PC-9 (cell line): ENCODE measurements at regions of chr1 and their contacts with region 1.

Region 1: DNA sequence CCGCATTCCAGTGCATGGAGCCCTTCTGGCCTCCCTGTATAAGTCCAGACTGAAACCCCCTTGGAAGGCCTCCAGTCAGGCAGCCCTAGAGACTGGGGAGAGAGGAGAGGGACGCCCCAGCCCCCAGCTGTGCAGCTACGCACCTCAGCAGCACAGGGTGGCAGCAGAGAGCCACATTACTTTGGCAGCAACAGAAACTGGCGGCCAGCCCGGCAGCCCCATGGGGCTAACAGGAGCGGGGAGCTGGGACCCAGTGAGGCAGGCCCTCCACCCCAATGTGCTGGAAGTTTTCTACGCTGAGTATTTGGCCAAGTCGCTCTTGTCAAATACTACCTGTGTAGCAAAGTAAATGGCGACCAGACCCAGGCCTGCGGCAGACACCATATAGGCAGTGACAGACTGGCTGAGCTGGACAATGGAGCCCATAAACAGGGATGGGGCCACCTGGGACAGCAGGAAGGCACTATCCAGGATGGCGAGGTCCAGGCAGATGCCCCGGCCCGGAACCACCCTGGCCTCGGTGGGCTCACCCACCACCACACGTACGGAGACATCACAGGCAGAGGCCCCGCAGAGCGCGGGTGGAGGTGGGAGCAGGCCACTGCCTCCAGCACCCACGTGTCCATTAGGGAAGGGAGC is 21.2 kb downstream of the SLC45A3 start:
- DNase-seq: peak in 1 of 2 experiments; percentile 74
- H3K4me3 ChIP-seq: no peak overlapping the region
- H3K27ac ChIP-seq: no peak overlapping the region
- H3K4me1 ChIP-seq: peaks cover 27% of the 10 kb centered on the region
- H3K27me3 ChIP-seq: no peaks in the 10 kb centered on the region
- CTCF ChIP-seq: peak; percentile 92

Region 2: GRCh38 chr1:205335643-205336091 is 323.4 kb before region 1 on chr1:
- CTCF ChIA-PET with region 1: no interaction called
- POLR2A ChIA-PET with region 1: no interaction called
- intact Hi-C with region 1: loop called (anchors 1 kb)
- DNase-seq: peak; percentile 63 to 85
- H3K4me3 ChIP-seq: no peak overlapping the region
- H3K27ac ChIP-seq: no peak overlapping the region
- H3K4me1 ChIP-seq: peaks cover 3% of the 10 kb centered on the region
- H3K27me3 ChIP-seq: peaks cover under 1% of the 10 kb centered on the region; the same call in 1 of the 2 replicates
- CTCF ChIP-seq: peak; percentile 88

Region 3: DNA sequence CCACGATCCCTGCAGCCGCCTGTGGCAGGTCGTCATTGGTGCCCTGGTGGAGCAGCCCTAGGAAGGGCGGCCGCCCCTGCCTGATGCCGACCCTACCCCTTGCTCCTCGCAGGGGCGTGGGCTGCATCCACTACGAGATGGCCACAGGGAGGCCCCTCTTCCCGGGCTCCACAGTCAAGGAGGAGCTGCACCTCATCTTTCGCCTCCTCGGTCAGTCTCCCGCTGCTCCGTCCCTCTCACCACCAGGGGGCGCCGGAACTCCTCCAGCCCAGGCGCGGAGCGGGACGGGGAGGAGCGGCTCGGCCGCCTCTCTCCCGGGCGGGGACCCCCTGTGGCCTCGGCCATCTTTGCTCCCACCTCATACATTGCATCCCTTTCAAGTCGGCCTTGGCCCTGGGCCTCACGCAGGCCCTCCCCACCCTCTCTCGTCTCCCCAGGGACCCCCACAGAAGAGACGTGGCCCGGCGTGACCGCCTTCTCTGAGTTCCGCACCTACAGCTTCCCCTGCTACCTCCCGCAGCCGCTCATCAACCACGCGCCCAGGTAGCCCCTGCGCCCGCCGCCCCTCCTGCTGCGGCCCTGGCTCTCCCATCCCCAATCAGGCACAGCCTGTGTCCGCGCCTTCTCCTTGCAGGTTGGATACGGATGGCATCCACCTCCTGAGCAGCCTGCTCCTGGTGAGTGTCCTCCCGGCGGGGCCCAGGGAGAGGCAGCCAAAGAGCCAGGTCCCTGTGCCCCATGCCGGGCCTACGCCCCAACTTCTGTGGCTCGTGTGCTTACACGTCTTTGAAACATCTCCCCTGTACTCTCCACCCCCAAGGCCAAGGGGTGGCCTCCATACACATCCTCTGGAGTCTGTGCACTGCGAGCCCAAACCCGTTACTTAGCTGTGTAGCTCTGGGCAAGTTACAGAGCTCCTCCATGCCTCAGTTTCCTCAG is 129.9 kb before region 1 on chr1:
- CTCF ChIA-PET with region 1: interaction called, 8 read pairs
- POLR2A ChIA-PET with region 1: no interaction called
- intact Hi-C with region 1: loop called (anchors 1 kb)
- DNase-seq: peak; percentile 46 to 77
- H3K4me3 ChIP-seq: no peak overlapping the region
- H3K27ac ChIP-seq: no peak overlapping the region
- H3K4me1 ChIP-seq: no peaks in the 10 kb centered on the region
- H3K27me3 ChIP-seq: no peaks in the 10 kb centered on the region
- CTCF ChIP-seq: peak; percentile 90

Region 4: GRCh38 chr1:205585169-205585834 is 73.8 kb before region 1 on chr1:
- CTCF ChIA-PET with region 1: interaction called, 12 read pairs
- POLR2A ChIA-PET with region 1: no interaction called
- intact Hi-C with region 1: no loop called
- DNase-seq: peak in 1 of 2 experiments; percentile 56
- H3K4me3 ChIP-seq: no peak overlapping the region
- H3K27ac ChIP-seq: no peak overlapping the region
- H3K4me1 ChIP-seq: peaks cover 32% of the 10 kb centered on the region
- H3K27me3 ChIP-seq: no peaks in the 10 kb centered on the region
- CTCF ChIP-seq: no peak

Region 5: GRCh38 chr1:205631727-205632373 is 27.2 kb before region 1 on chr1 and contains the start of gene ELK4:
- CTCF ChIA-PET with region 1: interaction called, 14 read pairs
- POLR2A ChIA-PET with region 1: interaction called, 3 read pairs
- intact Hi-C with region 1: no loop called
- DNase-seq: peak; percentile 90 to 98
- H3K4me3 ChIP-seq: peak within 1 kb of the TSS; percentile 92
- H3K27ac ChIP-seq: peak within 1 kb of the TSS; percentile 84
- H3K4me1 ChIP-seq: peaks cover 22% of the 10 kb centered on the region
- H3K27me3 ChIP-seq: no peaks in the 10 kb centered on the region
- CTCF ChIP-seq: peak; percentile 63
- total RNA-seq, gene ELK4: 40.3 and 48.1 TPM in 2 replicates

Region 6: GRCh38 chr1:205689479-205689878 is 30.4 kb after region 1 on chr1:
- CTCF ChIA-PET with region 1: no interaction called
- POLR2A ChIA-PET with region 1: no interaction called
- intact Hi-C with region 1: no loop called
- DNase-seq: no peak
- H3K4me3 ChIP-seq: no peak overlapping the region
- H3K27ac ChIP-seq: peak overlapping the region; percentile 45; the same call in 1 of the 2 replicates
- H3K4me1 ChIP-seq: peaks cover 23% of the 10 kb centered on the region
- H3K27me3 ChIP-seq: no peaks in the 10 kb centered on the region
- CTCF ChIP-seq: no peak

Region 7: DNA sequence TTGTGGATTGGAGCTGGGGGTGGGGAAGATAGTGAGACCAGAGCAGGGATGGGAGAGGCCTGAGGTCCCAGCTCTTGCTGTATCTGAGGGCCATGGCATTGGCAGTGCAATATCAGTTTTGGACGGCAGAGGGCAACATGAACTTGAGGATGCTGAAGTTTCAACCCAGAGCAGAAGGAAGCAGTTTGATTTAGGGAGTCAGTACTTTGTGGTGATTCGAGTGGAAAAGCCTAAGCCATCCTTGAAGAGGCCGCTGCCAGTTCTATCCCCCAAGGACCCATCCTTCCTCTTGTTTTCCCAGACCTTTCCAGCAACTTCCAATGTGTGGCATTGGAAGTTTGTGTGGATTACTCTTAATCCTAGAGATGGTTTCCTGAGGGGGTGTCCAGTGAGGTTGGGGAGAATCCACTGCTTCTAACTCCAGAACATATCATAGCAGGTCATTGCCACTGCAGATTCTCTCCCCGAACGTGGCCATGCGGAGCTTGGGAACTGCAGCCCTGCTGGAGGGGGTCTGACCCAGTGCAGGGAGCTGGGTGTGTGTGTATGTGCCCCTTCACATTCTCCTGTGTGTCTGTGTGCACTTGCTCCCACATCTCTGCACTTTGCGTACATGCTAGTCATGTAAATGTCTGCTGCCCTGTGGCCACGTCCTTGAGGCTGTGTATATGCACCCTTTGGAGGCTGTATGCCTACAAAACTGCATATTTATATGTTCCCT is 260.1 kb after region 1 on chr1:
- CTCF ChIA-PET with region 1: no interaction called
- POLR2A ChIA-PET with region 1: no interaction called
- intact Hi-C with region 1: loop called (anchors 5 kb)
- DNase-seq: peak; percentile 66 to 76
- H3K4me3 ChIP-seq: no peak overlapping the region
- H3K27ac ChIP-seq: no peak overlapping the region
- H3K4me1 ChIP-seq: no peaks in the 10 kb centered on the region
- H3K27me3 ChIP-seq: no peaks in the 10 kb centered on the region
- CTCF ChIP-seq: peak; percentile 97

Region 8: DNA sequence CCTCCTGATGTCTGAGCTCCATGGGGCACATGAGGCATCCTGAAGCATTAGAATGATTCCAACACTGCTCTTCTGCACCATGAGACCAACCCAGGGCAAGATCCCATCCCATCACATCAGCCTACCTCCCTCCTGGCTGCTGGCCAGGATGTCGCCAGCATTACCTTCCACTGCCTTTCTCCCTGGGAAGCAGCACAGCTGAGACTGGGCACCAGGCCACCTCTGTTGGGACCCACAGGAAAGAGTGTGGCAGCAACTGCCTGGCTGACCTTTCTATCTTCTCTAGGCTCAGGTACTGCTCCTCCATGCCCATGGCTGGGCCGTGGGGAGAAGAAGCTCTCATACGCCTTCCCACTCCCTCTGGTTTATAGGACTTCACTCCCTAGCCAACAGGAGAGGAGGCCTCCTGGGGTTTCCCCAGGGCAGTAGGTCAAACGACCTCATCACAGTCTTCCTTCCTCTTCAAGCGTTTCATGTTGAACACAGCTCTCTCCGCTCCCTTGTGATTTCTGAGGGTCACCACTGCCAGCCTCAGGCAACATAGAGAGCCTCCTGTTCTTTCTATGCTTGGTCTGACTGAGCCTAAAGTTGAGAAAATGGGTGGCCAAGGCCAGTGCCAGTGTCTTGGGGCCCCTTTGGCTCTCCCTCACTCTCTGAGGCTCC is 837.2 kb after region 1 on chr1:
- CTCF ChIA-PET with region 1: no interaction called
- POLR2A ChIA-PET with region 1: no interaction called
- intact Hi-C with region 1: no loop called
- DNase-seq: no peak
- H3K4me3 ChIP-seq: no peak overlapping the region
- H3K27ac ChIP-seq: no peak overlapping the region
- H3K4me1 ChIP-seq: peaks cover 20% of the 10 kb centered on the region
- H3K27me3 ChIP-seq: no peaks in the 10 kb centered on the region
- CTCF ChIP-seq: no peak